Heart right ventricle (tissue), 16 donors: ENCODE measurements at regions of chr12 and their contacts with region 1.

Region 1: DNA sequence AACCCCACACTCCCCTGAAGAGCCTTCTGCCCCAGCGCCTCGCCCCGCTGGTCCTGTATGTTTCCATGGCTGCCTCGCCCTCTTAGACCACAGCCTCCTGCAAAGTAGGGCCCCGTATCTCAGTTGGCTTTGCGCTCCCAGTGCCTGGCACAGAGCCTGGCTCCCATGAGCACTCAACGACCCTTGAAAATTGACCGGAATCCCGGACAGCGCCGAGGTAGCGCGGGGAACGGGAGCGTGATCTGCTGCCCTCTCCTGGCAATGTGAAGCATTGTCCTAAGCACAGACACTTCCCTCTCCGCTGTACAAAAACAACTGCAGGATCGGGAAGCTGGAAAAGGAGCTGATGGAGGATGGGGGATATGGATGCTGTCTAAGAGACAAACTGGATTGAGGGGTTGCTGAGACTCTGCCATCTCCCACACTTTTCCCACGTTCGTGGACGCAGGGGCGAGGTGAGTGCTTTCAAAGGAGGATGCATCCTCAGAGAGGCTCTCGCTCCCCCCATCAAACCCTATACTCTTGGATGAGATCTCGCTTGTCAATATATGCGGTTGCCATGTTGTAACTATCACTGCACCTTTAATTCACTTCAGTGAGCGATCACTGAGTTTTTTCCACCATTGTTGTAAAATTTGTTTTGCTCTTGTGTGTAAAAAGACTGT is 10.7 kb upstream of the FKBP4 start:
- DNase-seq: peak; percentile 74 to 75
- ATAC-seq: peak; percentile 93 to 97 (median 96)
- H3K4me3 ChIP-seq: peak overlapping the region in 7 of 10 donors; percentile 16 to 49 (median 28)
- H3K27ac ChIP-seq: no peak overlapping the region
- H3K4me1 ChIP-seq: peaks cover 0 to 11% (median 9%) of the 10 kb centered on the region in 9 donors
- H3K27me3 ChIP-seq: peaks cover 0 to 19% (median 0%) of the 10 kb centered on the region in 7 donors
- CTCF ChIP-seq: peak; percentile 73 to 95 (median 92)

Region 2: GRCh38 chr12:1804545-1805332 is 979.3 kb before region 1 on chr12:
- intact Hi-C with region 1: loop called in 1 of 10 experiments (anchors 10 kb)
- DNase-seq: peak; percentile 86 to 93
- ATAC-seq: peak; percentile 51 to 92 (median 86)
- H3K4me3 ChIP-seq: no peak overlapping the region
- H3K27ac ChIP-seq: peak overlapping the region in 6 of 10 donors; percentile 19 to 77 (median 42)
- H3K4me1 ChIP-seq: peaks cover 3 to 34% (median 14%) of the 10 kb centered on the region in 9 donors
- H3K27me3 ChIP-seq: no peaks in the 10 kb centered on the region
- CTCF ChIP-seq: no peak

Region 3: GRCh38 chr12:2682296-2683251 is 101.5 kb before region 1 on chr12:
- intact Hi-C with region 1: loop called in 1 of 10 experiments (anchors 10 kb)
- DNase-seq: no peak
- ATAC-seq: peak in 5 of 8 donors; percentile 9 to 56 (median 31)
- H3K4me3 ChIP-seq: no peak overlapping the region
- H3K27ac ChIP-seq: peak overlapping the region in 4 of 10 donors; percentile 5 to 53 (median 35)
- H3K4me1 ChIP-seq: peaks cover 0 to 17% (median 0%) of the 10 kb centered on the region in 9 donors
- H3K27me3 ChIP-seq: no peaks in the 10 kb centered on the region
- CTCF ChIP-seq: peak in 7 of 9 donors; percentile 23 to 54 (median 44)

Region 4: DNA sequence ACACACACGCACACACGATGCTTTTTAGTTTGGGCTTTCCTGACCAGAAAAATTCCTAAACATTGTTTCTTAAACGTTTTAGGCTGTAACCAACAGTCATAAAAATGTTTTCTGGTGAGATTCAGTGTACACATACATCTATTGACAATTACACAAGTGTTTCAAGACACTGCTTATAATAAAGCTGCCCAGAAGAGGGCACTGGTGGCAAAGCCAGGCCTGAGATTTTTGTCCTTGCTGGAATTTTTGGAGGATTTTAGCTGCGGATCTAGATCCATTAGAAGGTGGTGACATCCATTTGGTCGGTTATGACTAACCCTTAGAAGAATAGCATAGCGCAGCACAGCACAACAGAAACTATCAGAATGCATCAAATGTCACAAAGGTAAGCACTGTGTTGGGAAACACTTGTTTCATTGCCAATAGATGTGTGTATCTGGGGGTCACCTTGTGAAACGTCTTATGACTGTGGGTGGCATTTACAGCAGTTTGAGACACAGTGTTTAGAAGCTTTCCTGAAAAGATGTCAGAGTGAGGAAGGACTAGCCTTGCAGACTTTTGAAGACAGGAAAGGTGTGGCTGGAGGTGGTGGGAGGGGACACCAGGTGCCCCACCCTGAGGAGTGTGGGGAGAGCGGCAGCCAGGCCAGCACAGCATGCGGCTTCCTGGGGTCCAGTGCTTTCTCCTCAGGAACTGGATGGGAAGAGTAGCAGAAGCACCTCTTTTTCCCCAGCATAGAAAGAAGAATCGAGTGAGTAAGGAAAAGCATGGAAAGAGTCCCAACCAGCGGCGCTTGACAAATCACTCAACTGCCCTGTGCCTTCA is 44.0 kb before region 1 on chr12:
- intact Hi-C with region 1: loop called in 1 of 10 experiments (anchors 1 kb)
- DNase-seq: no peak
- ATAC-seq: no peak
- H3K4me3 ChIP-seq: no peak overlapping the region
- H3K27ac ChIP-seq: no peak overlapping the region
- H3K4me1 ChIP-seq: peaks cover 0 to 4% (median 0%) of the 10 kb centered on the region in 9 donors
- H3K27me3 ChIP-seq: peaks cover 0 to 1% (median 0%) of the 10 kb centered on the region in 7 donors
- CTCF ChIP-seq: peak in 8 of 9 donors; percentile 25 to 64 (median 56)